K562 (cell line): ENCODE measurements at regions of chr11 and their contacts with region 1.

Region 1: DNA sequence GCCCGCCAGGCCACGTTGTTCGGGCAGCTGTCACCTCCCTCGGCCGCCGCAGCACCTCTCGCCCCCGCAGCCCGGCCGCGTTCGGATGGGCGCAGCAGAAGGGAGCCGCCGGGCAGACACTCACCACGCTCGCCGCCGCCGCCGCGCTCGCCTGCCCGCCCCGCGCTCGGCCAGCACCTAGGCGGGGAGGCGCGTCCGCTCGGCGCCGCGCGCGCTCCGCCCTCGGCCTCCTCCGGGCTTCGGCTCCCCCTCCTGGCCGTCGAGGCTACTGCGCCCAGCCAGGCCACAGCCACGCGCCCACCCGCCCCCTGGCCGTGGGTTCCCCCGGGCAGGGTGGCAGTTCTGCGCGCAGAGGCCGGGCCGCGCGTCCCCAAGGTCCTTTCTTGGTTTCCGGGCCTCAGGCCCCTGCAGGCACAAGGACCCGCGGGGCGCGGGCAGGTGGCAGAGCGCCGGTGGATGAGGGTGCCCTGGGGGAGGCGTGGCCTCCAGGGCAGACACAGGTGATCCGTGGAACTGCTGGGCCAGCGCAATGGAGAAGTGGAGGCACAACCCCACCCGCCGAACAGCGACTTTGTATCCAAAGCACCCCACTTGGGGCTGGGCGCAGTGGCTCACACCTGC is at the start of gene SLC25A22:
- DNase-seq: peak; percentile 84 to 92 (median 86)
- ATAC-seq: peak; percentile 84
- H3K4me3 ChIP-seq: peak within 1 kb of the TSS; percentile 73
- H3K27ac ChIP-seq: peak within 1 kb of the TSS; percentile 71
- H3K4me1 ChIP-seq: peaks cover 7 to 97% of the 10 kb centered on the region in 2 experiments
- H3K27me3 ChIP-seq: no peaks in the 10 kb centered on the region
- CTCF ChIP-seq: peak; percentile 69 to 94 (median 83)
- EP300 ChIP-seq: no peak
- POLR2A ChIP-seq: no peak
- RAD21 ChIP-seq: peak; percentile 48 to 61
- polyA plus RNA-seq, gene SLC25A22: 0.41 to 0.44 TPM

Region 2: DNA sequence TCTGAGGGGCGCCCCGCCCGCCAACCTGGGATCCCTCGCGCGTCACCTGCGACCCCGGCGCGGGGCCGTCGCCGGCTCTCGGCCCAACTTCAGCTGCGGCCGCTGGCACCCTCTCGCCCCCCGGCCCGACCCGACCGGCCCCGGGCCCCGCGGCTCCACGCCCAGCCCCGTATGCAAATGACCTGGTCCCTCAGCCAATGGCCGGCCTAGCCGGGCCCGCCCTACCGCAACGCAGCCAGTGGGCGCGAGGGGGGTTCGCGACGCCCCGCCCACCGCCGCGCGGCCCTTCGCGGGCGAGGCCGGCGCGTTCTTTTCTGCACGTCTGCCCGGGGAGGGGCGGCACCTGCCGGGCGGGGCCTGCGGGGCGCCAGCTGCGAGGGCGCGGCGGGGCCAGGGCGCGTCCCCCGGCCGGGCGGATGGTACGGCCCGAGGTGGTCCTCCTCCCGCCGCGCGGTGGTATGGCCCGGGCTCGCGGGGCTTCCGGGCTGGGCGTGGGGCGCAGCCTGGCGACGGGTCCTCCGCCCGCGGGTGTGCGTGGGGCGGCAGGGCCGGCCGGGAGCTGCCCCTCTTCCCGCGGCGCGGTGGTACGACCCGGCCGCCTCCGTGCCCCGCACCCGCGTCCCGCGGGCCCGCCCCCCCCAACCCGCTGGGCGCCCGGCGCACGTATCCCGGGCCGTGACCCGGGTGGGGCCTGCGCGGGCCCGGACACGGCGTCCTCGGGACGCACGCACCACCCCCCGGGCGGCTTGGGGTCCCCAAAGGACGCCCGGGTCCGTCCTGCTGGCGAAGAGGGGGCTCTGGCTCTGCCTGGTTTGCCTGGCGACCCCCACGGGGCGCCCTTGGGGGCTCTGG is 229.7 kb before region 1 on chr11:
- CTCF ChIA-PET with region 1: no interaction called
- POLR2A ChIA-PET with region 1: no interaction called
- in situ Hi-C with region 1: no loop called
- intact Hi-C with region 1: loop called (anchors 10 kb)
- DNase-seq: peak; percentile 89 to 97 (median 94)
- ATAC-seq: peak; percentile 98
- H3K4me3 ChIP-seq: peak overlapping the region; percentile 84
- H3K27ac ChIP-seq: peak overlapping the region; percentile 82
- H3K4me1 ChIP-seq: peaks cover 31 to 71% of the 10 kb centered on the region in 2 experiments
- H3K27me3 ChIP-seq: no peaks in the 10 kb centered on the region
- CTCF ChIP-seq: no peak
- EP300 ChIP-seq: no peak
- POLR2A ChIP-seq: no peak
- RAD21 ChIP-seq: no peak

Region 3: DNA sequence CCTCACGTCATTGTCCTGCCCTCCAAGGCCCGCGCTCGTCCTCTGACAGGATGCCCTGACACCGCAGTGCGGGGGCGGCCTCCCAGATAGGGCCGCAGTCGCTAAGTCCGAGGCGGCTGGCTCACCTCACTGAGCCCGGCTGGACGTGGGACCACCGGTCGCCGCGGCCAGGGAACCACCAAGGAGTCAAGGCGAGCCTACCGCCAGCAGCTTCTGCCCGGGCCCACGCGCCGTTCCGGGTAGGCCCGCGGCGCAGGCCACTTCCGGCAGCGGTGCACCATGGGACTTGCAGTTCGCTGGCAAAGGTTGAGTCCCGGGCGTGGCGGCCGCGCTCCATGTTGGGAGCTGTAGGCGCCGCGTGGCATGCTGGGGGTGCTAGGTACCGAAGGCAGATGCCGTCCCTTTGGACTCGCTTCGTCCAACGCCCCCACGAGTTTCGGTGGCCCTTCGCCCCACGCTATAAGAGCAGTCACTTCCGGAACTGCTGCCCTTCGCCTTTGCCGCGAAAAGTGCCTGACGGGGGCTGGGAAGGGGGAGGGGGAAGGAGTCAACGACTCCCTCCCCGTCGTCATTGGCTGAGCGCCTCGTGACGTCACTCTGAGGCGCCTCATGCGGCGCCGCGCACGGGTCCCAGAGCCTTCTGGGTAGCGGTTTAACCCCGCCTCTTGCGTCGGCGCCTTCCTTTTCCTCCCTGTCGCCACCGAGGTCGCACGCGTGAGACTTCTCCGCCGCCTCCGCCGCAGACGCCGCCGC is 11.3 kb after region 1 on chr11 and contains the start of gene RPLP2:
- CTCF ChIA-PET with region 1: no interaction called
- POLR2A ChIA-PET with region 1: interaction called, 26 read pairs
- in situ Hi-C with region 1: no loop called
- intact Hi-C with region 1: no loop called
- DNase-seq: peak; percentile 84 to 99 (median 90)
- ATAC-seq: peak; percentile 83
- H3K4me3 ChIP-seq: peak within 1 kb of the TSS; percentile 99
- H3K27ac ChIP-seq: peak within 1 kb of the TSS; percentile 98
- H3K4me1 ChIP-seq: peaks cover 22 to 63% of the 10 kb centered on the region in 2 experiments; a peak in 4 of 5 replicates
- H3K27me3 ChIP-seq: no peaks in the 10 kb centered on the region
- CTCF ChIP-seq: no peak; a peak in 1 of 6 replicates
- EP300 ChIP-seq: no peak; the same call in 1 of the 2 replicates
- POLR2A ChIP-seq: peak; percentile 93
- RAD21 ChIP-seq: no peak
- polyA plus RNA-seq, gene RPLP2: 1,853 to 1,893 TPM

Region 4: DNA sequence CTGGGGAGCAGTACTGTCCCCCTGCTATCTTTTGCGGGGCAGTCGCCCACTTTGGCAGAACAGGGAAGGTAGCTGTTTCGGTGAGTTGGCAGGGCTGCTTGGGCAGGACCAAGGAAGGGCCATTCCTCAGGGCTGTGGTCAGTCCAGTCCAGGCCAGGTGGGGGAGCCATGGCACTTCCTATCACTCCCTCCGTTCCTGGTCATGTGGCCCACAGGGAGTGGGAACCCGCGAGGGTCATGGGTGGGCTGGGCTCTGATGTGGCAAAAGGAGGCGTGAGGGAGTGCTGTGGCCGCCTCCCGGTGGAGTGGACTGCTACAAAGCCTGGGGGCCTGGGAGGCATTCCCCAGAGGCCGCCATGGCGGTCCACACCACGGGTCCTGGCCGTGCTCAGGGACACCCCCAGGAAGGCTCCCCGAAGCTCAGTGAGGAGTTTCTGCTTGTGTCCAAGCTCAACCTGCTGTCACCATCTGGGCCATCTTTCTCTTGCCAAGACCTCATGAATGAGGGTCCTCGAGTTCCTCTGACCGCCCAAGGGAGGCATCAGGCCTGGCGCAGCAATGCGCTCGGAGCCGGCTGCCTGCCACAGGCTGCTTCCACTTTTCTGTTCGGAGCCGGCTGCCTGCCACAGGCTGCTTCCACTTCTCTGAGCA is 100.5 kb after region 1 on chr11:
- CTCF ChIA-PET with region 1: no interaction called
- POLR2A ChIA-PET with region 1: no interaction called
- in situ Hi-C with region 1: no loop called
- intact Hi-C with region 1: no loop called
- DNase-seq: peak in 3 of 4 experiments; percentile 33 to 44 (median 41)
- ATAC-seq: peak; percentile 82
- H3K4me3 ChIP-seq: no peak overlapping the region
- H3K27ac ChIP-seq: no peak overlapping the region
- H3K4me1 ChIP-seq: peaks cover 0 to 56% of the 10 kb centered on the region in 2 experiments; a peak in 2 of 5 replicates
- H3K27me3 ChIP-seq: no peaks in the 10 kb centered on the region
- CTCF ChIP-seq: peak; percentile 42 to 57 (median 45); a peak in 5 of 6 replicates
- EP300 ChIP-seq: no peak
- POLR2A ChIP-seq: no peak
- RAD21 ChIP-seq: peak; percentile 31 to 55